PC-9 (cell line): ENCODE measurements at regions of chr1 and their contacts with region 1.

Region 1: DNA sequence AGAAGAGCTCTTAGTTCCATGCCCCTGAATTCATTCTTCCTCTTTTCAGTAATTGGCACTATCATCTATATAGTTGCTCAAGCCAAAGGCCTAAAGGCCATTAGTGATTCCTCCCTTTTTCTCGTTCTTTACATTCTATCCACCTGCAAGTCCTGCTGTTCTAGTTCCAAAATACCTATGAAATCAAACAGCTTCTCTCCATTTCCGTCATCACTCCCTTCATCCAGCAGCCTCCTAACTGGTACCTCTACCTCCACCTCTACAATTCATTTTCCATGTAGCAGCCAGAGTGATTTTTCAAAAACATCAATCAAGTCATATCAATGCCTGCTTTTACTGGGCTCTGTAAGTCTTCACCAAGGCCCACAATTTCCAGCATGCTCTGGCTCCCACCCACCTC is 10.8 kb upstream of the TMEM54 start:
- DNase-seq: no peak
- H3K4me3 ChIP-seq: no peak overlapping the region
- H3K27ac ChIP-seq: no peak overlapping the region
- H3K4me1 ChIP-seq: no peaks in the 10 kb centered on the region
- H3K27me3 ChIP-seq: no peaks in the 10 kb centered on the region
- CTCF ChIP-seq: no peak

Region 2: GRCh38 chr1:32568929-32569328 is 343.0 kb before region 1 on chr1:
- CTCF ChIA-PET with region 1: no interaction called
- POLR2A ChIA-PET with region 1: interaction called, 13 read pairs
- intact Hi-C with region 1: no loop called
- DNase-seq: no peak
- H3K4me3 ChIP-seq: no peak overlapping the region
- H3K27ac ChIP-seq: no peak overlapping the region
- H3K4me1 ChIP-seq: no peaks in the 10 kb centered on the region
- H3K27me3 ChIP-seq: no peaks in the 10 kb centered on the region
- CTCF ChIP-seq: no peak

Region 3: GRCh38 chr1:32848354-32849063 is 63.5 kb before region 1 on chr1:
- CTCF ChIA-PET with region 1: interaction called, 15 read pairs
- POLR2A ChIA-PET with region 1: no interaction called
- intact Hi-C with region 1: no loop called
- DNase-seq: no peak
- H3K4me3 ChIP-seq: no peak overlapping the region
- H3K27ac ChIP-seq: no peak overlapping the region
- H3K4me1 ChIP-seq: no peaks in the 10 kb centered on the region
- H3K27me3 ChIP-seq: no peaks in the 10 kb centered on the region
- CTCF ChIP-seq: no peak

Region 4: GRCh38 chr1:32964461-32965250 is 52.7 kb after region 1 on chr1 and contains the start of gene RNF19B:
- CTCF ChIA-PET with region 1: no interaction called
- POLR2A ChIA-PET with region 1: no interaction called
- intact Hi-C with region 1: no loop called
- DNase-seq: peak; percentile 84 to 96
- H3K4me3 ChIP-seq: peak within 1 kb of the TSS; percentile 97
- H3K27ac ChIP-seq: peak within 1 kb of the TSS; percentile 54
- H3K4me1 ChIP-seq: peaks cover 43% of the 10 kb centered on the region
- H3K27me3 ChIP-seq: no peaks in the 10 kb centered on the region
- CTCF ChIP-seq: 0 out of 2 replicates have a peak, but pooled peaks have one; percentile 19
- total RNA-seq, gene RNF19B: 25.4 and 25.5 TPM in 2 replicates

Region 5: GRCh38 chr1:33410091-33410701 is 498.2 kb after region 1 on chr1:
- CTCF ChIA-PET with region 1: no interaction called
- POLR2A ChIA-PET with region 1: no interaction called
- intact Hi-C with region 1: no loop called
- DNase-seq: no peak
- H3K4me3 ChIP-seq: no peak overlapping the region
- H3K27ac ChIP-seq: no peak overlapping the region
- H3K4me1 ChIP-seq: no peaks in the 10 kb centered on the region
- H3K27me3 ChIP-seq: no peaks in the 10 kb centered on the region
- CTCF ChIP-seq: no peak